Activated naive CD4-positive, alpha-beta T cell treated with anti-CD3 and anti-CD28 coated beads for 36 hours (primary cell): ENCODE measurements at regions of chr19 and their contacts with region 1.

Region 1: DNA sequence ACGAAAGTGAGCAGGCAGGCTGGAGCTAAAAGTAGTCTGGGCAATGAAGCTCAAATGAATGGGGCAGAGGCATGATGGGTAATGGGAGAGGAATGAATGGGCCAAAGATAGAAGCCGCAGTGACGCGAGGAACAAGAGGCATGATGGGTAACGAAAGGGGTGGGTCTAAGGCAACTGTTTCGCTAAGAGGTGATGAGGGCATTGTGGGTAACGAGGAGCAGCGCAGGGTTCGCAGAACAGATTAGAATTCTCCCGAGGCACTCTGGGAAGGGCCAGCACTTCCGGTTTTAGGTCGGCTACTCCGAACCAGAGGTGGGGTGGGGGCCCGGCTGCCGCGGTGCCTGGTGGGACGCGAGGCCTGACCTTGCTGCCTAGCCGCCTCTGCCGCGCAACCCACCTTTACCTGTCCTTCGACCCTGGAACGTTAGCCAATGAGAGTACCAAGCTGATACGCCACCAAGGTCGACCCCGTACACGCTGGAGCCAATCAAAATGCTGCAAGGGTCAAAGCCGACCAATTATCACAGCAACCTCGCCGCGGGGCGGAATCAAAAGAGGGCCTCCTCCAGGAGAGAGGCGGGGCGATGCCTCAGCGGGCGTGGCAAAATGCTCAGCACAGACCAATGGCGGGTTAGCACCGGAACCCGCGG is 563 bp upstream of the TOMM40 start:
- DNase-seq: peak; percentile 100
- H3K4me3 Mint-ChIP-seq: peak overlapping the region; percentile 85
- H3K27ac Mint-ChIP-seq: peak overlapping the region; percentile 94
- H3K4me1 Mint-ChIP-seq: peaks cover 37% of the 10 kb centered on the region
- H3K27me3 Mint-ChIP-seq: no peaks in the 10 kb centered on the region

Region 2: DNA sequence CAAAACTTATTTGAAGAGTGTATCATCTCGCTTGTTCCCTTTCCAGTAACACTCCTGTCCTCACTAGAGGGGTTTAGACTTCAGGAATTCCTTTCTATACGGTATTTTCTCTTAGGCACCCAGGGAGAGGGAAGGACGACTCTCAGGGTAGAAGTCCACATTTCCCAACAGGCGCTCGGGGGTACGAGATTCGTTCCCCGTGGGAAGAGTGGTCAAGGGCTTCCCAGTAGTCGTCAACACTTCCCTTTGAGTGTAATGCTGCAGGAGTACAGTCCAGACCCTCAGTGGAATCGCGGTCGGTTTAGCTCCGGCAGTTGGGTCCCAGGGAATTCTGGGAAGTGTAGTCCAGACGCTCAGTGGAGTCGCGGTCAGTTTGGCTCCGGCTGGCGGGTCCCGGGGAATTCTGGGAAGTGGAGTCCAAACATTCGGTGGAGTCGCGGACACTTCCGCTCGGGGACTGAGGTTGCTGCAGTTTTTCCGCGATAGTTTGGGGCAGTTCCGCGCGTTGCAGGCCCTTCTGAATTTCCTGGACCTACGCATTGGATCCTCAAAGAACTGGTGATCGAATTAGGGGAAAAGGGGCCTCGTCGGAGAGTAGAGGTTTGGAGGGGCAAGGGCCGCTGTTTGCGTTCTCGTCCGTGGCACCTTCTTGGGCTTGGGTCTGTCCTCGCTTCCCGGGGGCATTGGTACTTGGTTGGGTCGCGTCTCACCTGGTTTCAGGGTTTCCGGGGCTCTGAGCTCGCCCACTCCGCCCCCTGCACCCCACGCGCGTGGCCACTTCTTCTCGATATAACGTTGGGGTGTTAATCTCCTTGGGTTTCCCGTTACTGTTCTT is 796.3 kb before region 1 on chr19 and contains the start of gene ZNF224:
- CTCF ChIA-PET with region 1: no interaction called
- intact Hi-C with region 1: loop called (anchors 2 kb)
- DNase-seq: peak; percentile 91
- H3K4me3 Mint-ChIP-seq: peak within 1 kb of the TSS; percentile 98
- H3K27ac Mint-ChIP-seq: peak within 1 kb of the TSS; percentile 87
- H3K4me1 Mint-ChIP-seq: peaks cover 13% of the 10 kb centered on the region
- H3K27me3 Mint-ChIP-seq: no peaks in the 10 kb centered on the region
- total RNA-seq, gene ZNF224: 8.7 to 10.9 TPM

Region 3: DNA sequence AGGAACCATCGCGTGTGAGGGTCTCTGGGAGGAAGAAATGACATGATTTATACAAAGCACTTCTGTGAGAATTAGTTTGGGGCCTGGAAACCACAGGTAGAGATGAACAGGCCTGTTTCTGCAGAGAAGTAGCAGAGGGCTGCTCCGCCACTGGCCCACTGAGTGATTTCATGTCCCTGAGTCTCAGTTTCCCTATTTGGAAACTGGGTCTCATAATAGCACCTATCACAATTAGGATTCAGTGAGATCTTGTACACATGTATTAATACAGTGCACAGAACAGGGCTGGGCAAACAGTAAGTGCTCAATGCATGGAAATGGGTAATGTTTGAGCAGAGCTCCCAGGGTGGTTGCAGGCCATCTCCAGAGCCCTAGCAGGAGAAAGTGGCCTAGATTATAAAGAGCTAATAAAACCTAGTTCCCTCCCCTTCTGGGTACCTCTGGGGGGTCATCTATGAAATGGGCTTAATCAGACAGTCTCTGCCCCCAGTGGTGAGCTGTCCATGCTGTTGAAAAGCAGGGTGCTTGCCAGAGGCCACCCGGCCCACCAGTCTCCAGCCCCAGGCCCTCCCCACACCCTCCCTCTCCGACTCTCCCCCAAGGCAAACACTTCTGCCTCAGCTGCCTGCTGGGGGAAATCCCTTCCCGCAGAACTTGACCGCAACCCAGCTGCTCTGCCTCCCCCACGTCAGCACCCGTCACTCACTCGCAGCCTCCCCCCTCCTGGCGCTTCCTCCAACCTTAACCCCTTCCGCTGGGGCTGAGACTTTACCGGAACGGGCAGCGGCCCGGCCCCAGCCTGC is 137.5 kb before region 1 on chr19:
- CTCF ChIA-PET with region 1: no interaction called
- intact Hi-C with region 1: loop called (anchors 1 kb)
- DNase-seq: peak; percentile 98
- H3K4me3 Mint-ChIP-seq: peak overlapping the region; percentile 93
- H3K27ac Mint-ChIP-seq: peak overlapping the region; percentile 97
- H3K4me1 Mint-ChIP-seq: peaks cover 59% of the 10 kb centered on the region
- H3K27me3 Mint-ChIP-seq: no peaks in the 10 kb centered on the region

Region 4: GRCh38 chr19:44912854-44913253 is 22.4 kb after region 1 on chr19:
- CTCF ChIA-PET with region 1: interaction called, 3 read pairs
- intact Hi-C with region 1: loop called (anchors 2 kb)
- DNase-seq: no peak
- H3K4me3 Mint-ChIP-seq: no peak overlapping the region
- H3K27ac Mint-ChIP-seq: no peak overlapping the region
- H3K4me1 Mint-ChIP-seq: peaks cover 9% of the 10 kb centered on the region
- H3K27me3 Mint-ChIP-seq: peaks cover 33% of the 10 kb centered on the region

Region 5: DNA sequence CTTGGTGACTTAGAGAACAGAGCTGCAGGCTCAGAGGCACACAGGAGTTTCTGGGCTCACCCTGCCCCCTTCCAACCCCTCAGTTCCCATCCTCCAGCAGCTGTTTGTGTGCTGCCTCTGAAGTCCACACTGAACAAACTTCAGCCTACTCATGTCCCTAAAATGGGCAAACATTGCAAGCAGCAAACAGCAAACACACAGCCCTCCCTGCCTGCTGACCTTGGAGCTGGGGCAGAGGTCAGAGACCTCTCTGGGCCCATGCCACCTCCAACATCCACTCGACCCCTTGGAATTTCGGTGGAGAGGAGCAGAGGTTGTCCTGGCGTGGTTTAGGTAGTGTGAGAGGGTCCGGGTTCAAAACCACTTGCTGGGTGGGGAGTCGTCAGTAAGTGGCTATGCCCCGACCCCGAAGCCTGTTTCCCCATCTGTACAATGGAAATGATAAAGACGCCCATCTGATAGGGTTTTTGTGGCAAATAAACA is 33.8 kb after region 1 on chr19:
- CTCF ChIA-PET with region 1: no interaction called
- intact Hi-C with region 1: no loop called
- DNase-seq: no peak
- H3K4me3 Mint-ChIP-seq: no peak overlapping the region
- H3K27ac Mint-ChIP-seq: no peak overlapping the region
- H3K4me1 Mint-ChIP-seq: no peaks in the 10 kb centered on the region
- H3K27me3 Mint-ChIP-seq: peaks cover 18% of the 10 kb centered on the region

Region 6: DNA sequence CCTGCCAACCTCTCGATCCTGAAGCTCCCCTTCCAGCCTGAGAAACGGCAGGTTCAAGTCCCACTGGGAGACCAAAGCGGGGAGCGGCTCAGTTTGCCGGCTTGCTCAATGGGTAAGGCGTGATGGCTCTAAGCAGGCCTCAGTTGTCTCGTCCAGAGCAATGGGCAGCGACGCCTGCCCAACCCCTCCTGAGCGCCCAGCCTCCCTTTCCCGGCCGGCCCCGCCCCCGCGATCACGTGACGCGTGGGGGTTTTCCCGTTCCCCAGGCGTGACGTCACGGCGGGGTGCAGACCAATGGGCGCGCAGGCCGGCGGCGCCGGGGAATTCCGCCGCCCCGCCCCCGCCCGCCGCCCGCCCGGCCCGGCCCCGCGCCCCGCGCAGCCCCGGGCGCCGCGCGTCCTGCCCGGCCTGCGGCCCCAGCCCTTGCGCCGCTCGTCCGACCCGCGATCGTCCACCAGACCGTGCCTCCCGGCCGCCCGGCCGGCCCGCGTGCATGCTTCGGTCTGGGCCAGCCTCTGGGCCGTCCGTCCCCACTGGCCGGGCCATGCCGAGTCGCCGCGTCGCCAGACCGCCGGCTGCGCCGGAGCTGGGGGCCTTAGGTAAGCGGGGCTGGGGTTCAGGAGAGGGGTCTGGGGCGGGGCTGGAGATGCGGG is 110.7 kb after region 1 on chr19 and contains the start of gene RELB:
- CTCF ChIA-PET with region 1: no interaction called
- intact Hi-C with region 1: loop called (anchors 1 kb)
- DNase-seq: peak; percentile 95
- H3K4me3 Mint-ChIP-seq: peak within 1 kb of the TSS; percentile 95
- H3K27ac Mint-ChIP-seq: peak within 1 kb of the TSS; percentile 98
- H3K4me1 Mint-ChIP-seq: peaks cover 17% of the 10 kb centered on the region
- H3K27me3 Mint-ChIP-seq: no peaks in the 10 kb centered on the region
- total RNA-seq, gene RELB: 55.4 to 57.3 TPM

Region 7: GRCh38 chr19:45092747-45093678 is 202.5 kb after region 1 on chr19 and contains the start of gene PPP1R37:
- CTCF ChIA-PET with region 1: no interaction called
- intact Hi-C with region 1: loop called (anchors 1 kb)
- DNase-seq: peak; percentile 95
- H3K4me3 Mint-ChIP-seq: peak within 1 kb of the TSS; percentile 93
- H3K27ac Mint-ChIP-seq: peak within 1 kb of the TSS; percentile 98
- H3K4me1 Mint-ChIP-seq: peaks cover 50% of the 10 kb centered on the region
- H3K27me3 Mint-ChIP-seq: no peaks in the 10 kb centered on the region
- total RNA-seq, gene PPP1R37: 10.2 to 10.3 TPM

Region 8: DNA sequence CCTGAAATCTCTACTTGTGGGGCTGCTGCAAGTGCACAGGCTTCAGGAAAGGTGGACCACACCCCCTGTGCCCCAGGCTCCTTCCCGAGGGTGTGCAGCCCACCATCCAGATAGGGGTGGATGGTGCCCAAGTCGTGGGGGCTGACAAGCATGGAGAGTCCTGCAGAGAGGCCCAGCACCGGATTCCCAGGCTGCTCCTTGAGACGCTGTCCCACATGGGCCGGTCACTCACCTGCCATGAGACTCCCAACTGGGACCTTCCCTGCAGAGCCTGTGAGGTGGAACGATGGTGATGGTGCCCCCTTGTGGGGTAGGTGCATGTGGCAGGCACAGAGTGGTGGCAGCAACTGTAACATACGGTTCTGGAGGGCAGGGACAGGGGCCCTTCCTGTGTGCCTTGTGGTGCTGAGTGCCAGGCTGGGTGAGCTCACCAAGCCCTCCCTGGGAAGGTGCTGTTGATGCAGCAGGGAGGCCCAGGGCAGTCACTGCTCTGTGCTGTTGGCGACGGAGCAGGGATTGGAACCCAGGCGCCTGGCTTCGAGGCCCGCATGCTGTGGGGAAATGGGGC is 235.5 kb after region 1 on chr19:
- CTCF ChIA-PET with region 1: no interaction called
- intact Hi-C with region 1: no loop called
- DNase-seq: peak; percentile 83
- H3K4me3 Mint-ChIP-seq: no peak overlapping the region
- H3K27ac Mint-ChIP-seq: no peak overlapping the region
- H3K4me1 Mint-ChIP-seq: peaks cover 18% of the 10 kb centered on the region
- H3K27me3 Mint-ChIP-seq: no peaks in the 10 kb centered on the region